Activated CD4-positive, alpha-beta T cell treated with anti-CD3 and anti-CD28 coated beads for 36 hours (primary cell): ENCODE measurements at regions of chr13 and their contacts with region 1.

Region 1: GRCh38 chr13:112072531-112073244 is 5.7 kb downstream of the SOX1 start:
- DNase-seq: no peak
- ATAC-seq: no peak
- H3K4me3 Mint-ChIP-seq: no peak overlapping the region
- H3K27ac Mint-ChIP-seq: no peak overlapping the region
- H3K4me1 Mint-ChIP-seq: peaks cover 8% of the 10 kb centered on the region
- H3K27me3 Mint-ChIP-seq: peaks cover 61% of the 10 kb centered on the region

Region 2: DNA sequence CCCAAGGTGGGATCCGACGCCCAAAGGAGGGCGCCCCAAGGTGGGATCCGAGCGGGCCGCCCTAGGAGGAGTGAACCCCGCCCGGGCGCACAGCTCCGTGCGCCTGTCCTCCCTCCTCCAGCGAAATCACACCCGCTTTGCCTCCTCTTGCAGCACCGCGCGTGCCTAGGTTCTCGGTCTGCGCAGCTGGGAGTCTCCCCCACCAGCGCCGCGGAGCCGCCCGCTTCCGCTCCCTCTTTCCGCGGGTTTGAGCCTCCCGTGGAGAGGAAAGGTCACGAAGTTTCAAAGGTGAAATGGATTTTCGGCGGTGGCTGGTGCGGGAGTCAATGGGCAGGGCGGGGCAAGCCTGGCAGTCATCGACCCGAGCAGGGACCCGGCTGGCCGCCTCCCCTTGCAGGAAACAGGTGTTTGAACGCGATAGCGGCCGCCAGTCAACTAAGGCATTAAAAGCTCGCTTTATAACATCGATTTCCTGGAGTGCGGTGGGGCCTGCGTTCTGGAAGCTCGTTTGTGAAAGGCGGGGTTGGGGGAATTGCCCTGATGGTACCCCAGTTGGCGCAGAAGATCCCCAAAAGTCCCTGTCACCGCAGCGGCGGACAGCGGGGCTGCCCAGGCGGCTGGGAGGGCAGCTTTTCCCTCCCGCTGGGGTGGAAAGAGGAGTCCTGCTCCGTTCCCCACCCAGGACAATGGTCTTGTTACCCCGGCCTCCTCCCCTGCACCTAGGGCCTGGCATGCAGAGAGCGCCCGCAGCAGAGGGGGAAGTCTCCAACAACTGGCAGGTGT is 14.8 kb before region 1 on chr13:
- CTCF ChIA-PET with region 1: interaction called, 4 read pairs
- POLR2A ChIA-PET with region 1: no interaction called
- intact Hi-C with region 1: loop called (anchors 1 to 2 kb)
- DNase-seq: no peak
- ATAC-seq: no peak
- H3K4me3 Mint-ChIP-seq: no peak overlapping the region
- H3K27ac Mint-ChIP-seq: no peak overlapping the region
- H3K4me1 Mint-ChIP-seq: peaks cover 2% of the 10 kb centered on the region
- H3K27me3 Mint-ChIP-seq: peaks cover 70% of the 10 kb centered on the region

Region 3: GRCh38 chr13:112083971-112084370 is 11.3 kb after region 1 on chr13:
- CTCF ChIA-PET with region 1: no interaction called
- POLR2A ChIA-PET with region 1: no interaction called
- intact Hi-C with region 1: no loop called
- DNase-seq: no peak
- ATAC-seq: no peak
- H3K4me3 Mint-ChIP-seq: no peak overlapping the region
- H3K27ac Mint-ChIP-seq: no peak overlapping the region
- H3K4me1 Mint-ChIP-seq: no peaks in the 10 kb centered on the region
- H3K27me3 Mint-ChIP-seq: peaks cover 26% of the 10 kb centered on the region